ENCODE measurements at regions of chr19 and their contacts with region 1.

Region 1: GRCh38 chr19:51456541-51457290 is 1.5 kb downstream of the SIGLEC8 start:
- DNase-seq: no peak
- H3K4me3 ChIP-seq: no peak overlapping the region
- H3K27ac ChIP-seq: no peak overlapping the region
- H3K4me1 ChIP-seq: no peaks in the 10 kb centered on the region
- H3K27me3 ChIP-seq: peaks cover 0 to 46% of the 10 kb centered on the region in 2 donors
- CTCF ChIP-seq: no peak
- POLR2A ChIP-seq: no peak

Region 2: DNA sequence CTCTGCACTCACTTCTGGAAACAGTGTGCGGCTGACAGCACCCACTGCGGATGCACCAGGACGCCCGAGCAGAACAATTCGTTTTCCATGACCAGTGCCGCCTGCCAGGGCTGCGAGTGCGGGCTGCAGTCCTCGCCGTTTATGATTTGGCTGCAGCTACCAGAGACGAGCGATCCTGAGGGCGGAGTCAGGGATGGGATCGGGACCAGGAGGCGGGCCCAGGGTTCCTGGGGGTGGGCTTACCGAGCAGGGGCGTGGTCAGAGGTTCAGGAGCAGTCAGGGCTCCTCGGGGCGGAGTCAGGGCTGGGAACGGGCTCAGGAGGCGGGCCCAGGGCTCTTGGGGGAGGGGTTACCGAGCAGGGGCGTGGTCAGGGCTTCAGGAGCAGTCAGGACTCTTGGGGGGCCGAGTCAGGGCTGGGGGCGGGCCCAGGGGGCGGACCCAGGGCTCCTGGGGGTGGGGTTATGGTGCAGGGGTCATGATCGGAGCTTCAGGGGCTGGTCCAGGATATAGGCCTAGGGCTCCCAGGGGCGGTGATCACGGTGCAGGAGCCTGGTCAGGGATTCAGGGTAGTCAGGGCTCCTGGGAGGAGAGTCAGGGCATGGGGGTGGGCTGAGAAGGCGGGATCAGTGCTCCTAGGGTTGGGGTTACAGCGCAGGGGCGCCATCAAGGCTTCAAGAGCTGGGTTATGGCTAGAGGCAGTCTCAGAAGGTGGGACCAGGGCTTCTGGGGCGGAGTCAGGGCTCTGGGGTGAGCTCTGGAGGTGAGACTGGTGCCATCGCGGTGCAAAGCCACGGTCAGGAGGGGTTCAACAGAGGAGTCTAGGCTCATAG is 547.3 kb before region 1 on chr19:
- intact Hi-C with region 1: loop called (anchors 10 kb)
- DNase-seq: peak in 1 of 2 donors; percentile 44
- H3K4me3 ChIP-seq: peak overlapping the region in 2 of 3 donors; percentile 29 to 50
- H3K27ac ChIP-seq: peak overlapping the region in 1 of 2 donors; percentile 25
- H3K4me1 ChIP-seq: no peaks in the 10 kb centered on the region
- H3K27me3 ChIP-seq: peaks cover 2 to 54% of the 10 kb centered on the region in 2 donors
- CTCF ChIP-seq: no peak
- POLR2A ChIP-seq: no peak